Endothelial cell of umbilical vein (primary cell): ENCODE measurements at regions of chr19 and their contacts with region 1.

Region 1: DNA sequence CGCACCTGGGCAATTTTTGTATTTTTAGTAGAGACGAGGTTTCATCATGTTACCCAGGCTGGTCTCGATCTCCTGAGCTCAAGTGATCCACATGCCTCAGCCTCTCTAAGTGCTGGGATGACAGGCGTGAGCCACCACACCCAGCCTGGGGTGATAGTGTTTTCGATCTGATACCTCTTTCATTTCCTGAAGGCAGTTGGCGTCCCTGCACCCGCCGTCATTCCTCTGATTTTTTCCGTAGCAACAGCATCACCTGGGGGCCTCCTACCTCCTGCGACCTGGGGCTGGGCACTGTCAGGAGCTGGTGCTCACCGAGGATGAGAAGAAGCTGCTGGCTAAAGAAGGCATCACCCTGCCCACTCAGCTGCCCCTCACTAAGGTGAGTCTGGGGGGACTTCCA is 10.8 kb downstream of the CREB3L3 start:
- DNase-seq: no peak
- H3K4me3 ChIP-seq: no peak overlapping the region
- H3K27ac ChIP-seq: no peak overlapping the region
- H3K4me1 ChIP-seq: no peaks in the 10 kb centered on the region
- H3K27me3 ChIP-seq: no peaks in the 10 kb centered on the region
- CTCF ChIP-seq: no peak
- POLR2A ChIP-seq: no peak

Region 2: DNA sequence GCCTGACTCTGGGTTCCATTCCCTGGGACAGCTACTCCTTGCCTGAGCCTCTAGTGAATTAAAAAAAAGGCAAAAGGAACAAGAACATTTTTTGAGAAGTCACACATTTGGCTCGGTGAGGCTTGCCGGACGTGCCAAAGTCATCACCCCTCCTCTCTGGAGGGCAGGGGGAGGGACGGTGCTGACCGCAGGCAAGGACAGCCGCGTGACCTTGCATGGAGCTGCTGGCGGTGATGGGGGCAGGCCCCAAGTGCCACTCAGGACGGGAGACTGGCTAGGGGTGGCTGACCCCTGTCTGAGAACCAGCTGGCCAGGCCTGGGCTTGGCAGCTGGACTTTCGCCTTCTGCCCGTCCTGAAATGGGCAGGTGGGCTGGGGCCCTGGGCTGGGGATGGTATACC is 66.8 kb before region 1 on chr19:
- CTCF ChIA-PET with region 1: no interaction called
- POLR2A ChIA-PET with region 1: no interaction called
- dilution Hi-C with region 1: no loop called
- intact Hi-C with region 1: no loop called
- DNase-seq: no peak
- H3K4me3 ChIP-seq: no peak overlapping the region
- H3K27ac ChIP-seq: no peak overlapping the region
- H3K4me1 ChIP-seq: no peaks in the 10 kb centered on the region
- H3K27me3 ChIP-seq: no peaks in the 10 kb centered on the region
- CTCF ChIP-seq: no peak
- POLR2A ChIP-seq: no peak

Region 3: DNA sequence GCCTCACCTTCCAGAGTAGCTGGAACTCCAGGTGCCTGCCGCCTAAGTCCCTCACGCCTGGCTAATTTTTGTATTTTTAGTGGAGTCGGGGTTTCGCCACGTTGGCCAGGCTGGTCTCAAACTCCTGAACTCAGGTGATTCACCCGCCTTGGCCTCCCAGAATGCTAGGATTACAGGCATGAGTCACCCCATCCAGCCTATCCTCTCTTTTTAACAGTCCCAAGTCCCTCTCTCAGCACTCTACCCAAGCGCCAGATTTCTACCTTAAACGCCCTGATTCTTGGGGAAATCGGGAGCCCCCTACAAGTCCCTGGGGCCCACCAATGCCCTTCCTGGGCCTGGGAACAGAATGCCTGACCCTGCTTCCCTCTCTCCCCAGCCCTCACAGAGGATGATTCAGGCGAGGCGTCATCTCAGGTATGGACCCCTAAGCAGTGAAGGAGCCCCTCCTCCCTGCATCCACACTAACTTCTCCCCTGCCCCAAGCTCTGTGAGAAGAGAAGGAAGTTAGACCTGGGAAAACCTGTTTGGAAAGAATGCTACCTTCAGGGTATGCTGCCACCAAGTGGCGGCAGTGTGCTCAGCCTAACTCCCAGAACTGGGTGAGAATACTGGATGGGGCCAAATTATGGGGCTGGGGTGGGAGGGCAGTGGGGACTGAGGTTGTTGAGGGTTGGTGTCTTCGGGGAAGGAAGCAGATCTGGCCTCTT is 44.3 kb after region 1 on chr19:
- CTCF ChIA-PET with region 1: interaction called, 7 read pairs
- POLR2A ChIA-PET with region 1: no interaction called
- dilution Hi-C with region 1: no loop called
- intact Hi-C with region 1: loop called (anchors 1 kb)
- DNase-seq: no peak
- H3K4me3 ChIP-seq: no peak overlapping the region
- H3K27ac ChIP-seq: no peak overlapping the region
- H3K4me1 ChIP-seq: no peaks in the 10 kb centered on the region
- H3K27me3 ChIP-seq: no peaks in the 10 kb centered on the region
- CTCF ChIP-seq: peak; percentile 37 to 74
- POLR2A ChIP-seq: no peak